H1 (cell line): ENCODE measurements at regions of chr4 and their contacts with region 1.

Region 1: DNA sequence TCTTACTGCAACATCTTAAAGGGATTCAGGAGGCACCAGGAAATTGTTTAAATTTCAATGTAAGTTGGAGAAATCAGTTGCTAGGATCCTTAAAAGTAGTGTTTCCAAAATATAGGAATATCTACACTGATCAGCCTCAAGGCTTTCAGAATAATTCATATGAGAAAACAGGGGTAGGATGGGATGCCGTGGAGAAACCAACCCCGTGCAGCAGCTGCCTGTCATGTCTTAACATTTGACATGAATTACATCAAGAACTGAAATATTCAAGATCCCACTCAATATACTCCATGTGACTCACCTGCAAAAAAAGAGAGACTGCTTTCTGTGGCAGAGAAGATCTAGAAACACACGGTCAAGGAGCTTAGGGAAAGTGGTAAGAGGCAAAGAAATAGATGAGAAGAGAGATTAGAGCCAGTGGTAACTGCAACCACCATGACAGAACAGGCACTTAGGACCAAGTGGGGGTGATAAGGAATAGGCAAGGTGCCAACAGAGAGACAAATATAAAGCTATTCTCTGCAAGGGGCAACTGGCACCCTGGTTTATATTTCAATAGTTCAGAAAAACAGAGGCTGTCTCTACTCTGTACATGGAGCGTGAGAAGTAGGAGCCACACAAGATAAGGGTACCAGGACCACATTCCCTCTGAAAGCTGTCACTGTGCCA is 64.0 kb downstream of the SLC39A8 start:
- DNase-seq: no peak
- H3K4me3 ChIP-seq: no peak overlapping the region
- H3K27ac ChIP-seq: no peak overlapping the region
- H3K4me1 ChIP-seq: no peaks in the 10 kb centered on the region
- H3K27me3 ChIP-seq: no peaks in the 10 kb centered on the region; a peak in 1 of 7 replicates
- CTCF ChIP-seq: no peak
- EP300 ChIP-seq: no peak
- POLR2A ChIP-seq: no peak
- RAD21 ChIP-seq: no peak

Region 2: GRCh38 chr4:100421361-100421978 is 1859.8 kb before region 1 on chr4:
- CTCF ChIA-PET with region 1: interaction called, 10 read pairs
- POLR2A ChIA-PET with region 1: no interaction called
- DNase-seq: no peak
- H3K4me3 ChIP-seq: no peak overlapping the region
- H3K27ac ChIP-seq: no peak overlapping the region
- H3K4me1 ChIP-seq: no peaks in the 10 kb centered on the region
- H3K27me3 ChIP-seq: no peaks in the 10 kb centered on the region
- CTCF ChIP-seq: peak in 2 of 3 experiments; percentile 46 to 50; a peak in 2 of 4 replicates
- EP300 ChIP-seq: no peak
- POLR2A ChIP-seq: no peak
- RAD21 ChIP-seq: peak; percentile 78 to 83

Region 3: GRCh38 chr4:102263011-102263787 is 18.1 kb before region 1 on chr4:
- CTCF ChIA-PET with region 1: no interaction called
- POLR2A ChIA-PET with region 1: no interaction called
- DNase-seq: no peak
- H3K4me3 ChIP-seq: no peak overlapping the region
- H3K27ac ChIP-seq: no peak overlapping the region
- H3K4me1 ChIP-seq: no peaks in the 10 kb centered on the region
- H3K27me3 ChIP-seq: no peaks in the 10 kb centered on the region
- CTCF ChIP-seq: peak in 2 of 3 experiments; percentile 44 to 63; a peak in 2 of 4 replicates
- EP300 ChIP-seq: no peak
- POLR2A ChIP-seq: no peak
- RAD21 ChIP-seq: peak; percentile 81 to 87

Region 4: DNA sequence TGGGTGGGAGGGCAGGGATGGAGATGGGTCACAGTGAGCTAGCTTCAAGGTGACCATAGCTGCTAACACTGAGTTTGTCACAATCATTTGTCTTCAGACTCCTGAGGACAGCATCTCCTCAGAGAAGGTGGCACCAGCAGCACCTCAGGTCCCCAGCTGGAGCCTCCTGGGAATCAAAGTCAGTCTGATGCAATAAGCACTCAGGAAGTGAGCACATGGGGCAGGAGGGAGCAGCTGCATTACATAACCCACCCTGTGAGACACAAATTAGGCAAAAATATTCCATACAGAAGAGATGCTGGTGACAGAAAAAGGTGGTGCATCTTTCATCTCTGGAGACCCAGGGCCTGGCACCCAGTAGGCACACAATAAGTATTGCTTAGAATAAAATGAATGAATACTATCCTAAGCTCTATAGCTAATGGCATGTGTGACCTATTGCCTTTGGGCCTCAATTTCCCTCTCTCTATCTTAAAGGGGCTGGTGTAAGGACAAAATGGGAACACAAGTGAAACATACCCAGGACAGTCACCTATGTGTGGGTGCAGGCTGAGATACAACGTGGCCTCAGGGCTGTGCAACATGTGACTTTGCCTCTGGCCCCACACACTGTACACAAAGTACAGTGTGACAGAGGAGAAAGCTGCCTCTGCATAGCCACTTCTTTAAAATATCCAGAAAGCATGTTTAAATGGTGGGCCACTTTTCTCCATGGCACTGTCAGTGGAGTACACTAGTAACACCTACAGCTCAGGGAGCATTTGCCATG is 26.9 kb after region 1 on chr4:
- CTCF ChIA-PET with region 1: no interaction called
- POLR2A ChIA-PET with region 1: no interaction called
- DNase-seq: no peak
- H3K4me3 ChIP-seq: no peak overlapping the region
- H3K27ac ChIP-seq: no peak overlapping the region
- H3K4me1 ChIP-seq: no peaks in the 10 kb centered on the region
- H3K27me3 ChIP-seq: no peaks in the 10 kb centered on the region
- CTCF ChIP-seq: no peak
- EP300 ChIP-seq: no peak
- POLR2A ChIP-seq: no peak
- RAD21 ChIP-seq: no peak